Activated CD4-positive, alpha-beta T cell treated with anti-CD3 and anti-CD28 coated beads, Interleukin-2, amount 10 ng/mL, durations not matched to agents 7 days and 5 days (primary cell): ENCODE measurements at regions of chr11 and their contacts with region 1.

Region 1: GRCh38 chr11:59142530-59143507 is at the start of gene FAM111A:
- DNase-seq: peak; percentile 94
- H3K4me3 Mint-ChIP-seq: peak within 1 kb of the TSS; percentile 89
- H3K27ac Mint-ChIP-seq: peak within 1 kb of the TSS; percentile 96
- H3K4me1 Mint-ChIP-seq: peaks cover 52% of the 10 kb centered on the region
- H3K27me3 Mint-ChIP-seq: no peaks in the 10 kb centered on the region
- total RNA-seq, gene FAM111A: 208 to 258 TPM

Region 2: GRCh38 chr11:59117774-59118173 is 25.0 kb before region 1 on chr11:
- CTCF ChIA-PET with region 1: no interaction called
- POLR2A ChIA-PET with region 1: no interaction called
- DNase-seq: no peak
- H3K4me3 Mint-ChIP-seq: no peak overlapping the region
- H3K27ac Mint-ChIP-seq: no peak overlapping the region
- H3K4me1 Mint-ChIP-seq: peaks cover 19% of the 10 kb centered on the region
- H3K27me3 Mint-ChIP-seq: no peaks in the 10 kb centered on the region

Region 3: DNA sequence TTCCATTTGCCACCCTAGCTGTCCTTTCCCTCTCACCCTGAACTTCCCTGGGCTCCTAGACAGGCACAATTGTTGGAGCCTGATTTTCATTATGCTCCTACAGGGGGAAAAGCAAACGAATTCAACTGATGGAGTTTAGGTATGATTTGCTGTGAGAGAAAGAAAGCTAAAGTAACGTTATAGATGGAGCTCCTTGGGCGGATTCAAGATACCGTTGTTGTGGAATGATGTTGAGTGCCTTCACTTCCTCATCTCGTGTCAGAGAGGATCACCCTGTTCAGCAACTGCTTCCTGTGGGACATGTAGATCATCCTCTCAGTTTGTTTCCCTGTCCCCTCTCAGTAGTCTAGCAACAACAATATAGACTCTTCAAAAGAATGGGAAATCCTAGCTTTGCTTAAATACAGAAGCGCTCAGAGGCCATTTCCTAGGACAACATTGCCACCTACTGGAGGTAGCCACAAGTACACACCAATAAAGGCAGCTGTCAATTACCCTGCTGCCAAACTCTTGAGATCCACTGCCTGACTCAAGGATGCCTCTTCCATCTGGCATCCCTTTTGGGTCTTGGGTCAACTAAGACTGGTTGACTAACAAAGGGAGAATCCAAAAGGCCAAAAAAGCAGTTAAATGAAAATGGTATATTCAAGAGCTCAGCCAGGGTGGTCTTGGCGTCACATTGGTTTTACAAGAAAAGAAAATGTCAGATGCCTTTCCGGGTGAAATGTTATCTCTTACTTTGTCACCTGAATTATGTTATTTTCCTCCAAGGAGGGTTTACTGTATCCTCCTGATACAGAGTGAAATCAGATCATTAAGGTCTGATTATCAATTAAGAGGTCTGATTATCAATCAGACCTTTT is 15.6 kb after region 1 on chr11:
- CTCF ChIA-PET with region 1: interaction called, 43 read pairs
- POLR2A ChIA-PET with region 1: interaction called, 5 read pairs
- DNase-seq: peak; percentile 75
- H3K4me3 Mint-ChIP-seq: no peak overlapping the region
- H3K27ac Mint-ChIP-seq: peak overlapping the region; percentile 9
- H3K4me1 Mint-ChIP-seq: peaks cover 14% of the 10 kb centered on the region
- H3K27me3 Mint-ChIP-seq: peaks cover 7% of the 10 kb centered on the region